ENCODE measurements at regions of chr1 and their contacts with region 1.

Region 1: DNA sequence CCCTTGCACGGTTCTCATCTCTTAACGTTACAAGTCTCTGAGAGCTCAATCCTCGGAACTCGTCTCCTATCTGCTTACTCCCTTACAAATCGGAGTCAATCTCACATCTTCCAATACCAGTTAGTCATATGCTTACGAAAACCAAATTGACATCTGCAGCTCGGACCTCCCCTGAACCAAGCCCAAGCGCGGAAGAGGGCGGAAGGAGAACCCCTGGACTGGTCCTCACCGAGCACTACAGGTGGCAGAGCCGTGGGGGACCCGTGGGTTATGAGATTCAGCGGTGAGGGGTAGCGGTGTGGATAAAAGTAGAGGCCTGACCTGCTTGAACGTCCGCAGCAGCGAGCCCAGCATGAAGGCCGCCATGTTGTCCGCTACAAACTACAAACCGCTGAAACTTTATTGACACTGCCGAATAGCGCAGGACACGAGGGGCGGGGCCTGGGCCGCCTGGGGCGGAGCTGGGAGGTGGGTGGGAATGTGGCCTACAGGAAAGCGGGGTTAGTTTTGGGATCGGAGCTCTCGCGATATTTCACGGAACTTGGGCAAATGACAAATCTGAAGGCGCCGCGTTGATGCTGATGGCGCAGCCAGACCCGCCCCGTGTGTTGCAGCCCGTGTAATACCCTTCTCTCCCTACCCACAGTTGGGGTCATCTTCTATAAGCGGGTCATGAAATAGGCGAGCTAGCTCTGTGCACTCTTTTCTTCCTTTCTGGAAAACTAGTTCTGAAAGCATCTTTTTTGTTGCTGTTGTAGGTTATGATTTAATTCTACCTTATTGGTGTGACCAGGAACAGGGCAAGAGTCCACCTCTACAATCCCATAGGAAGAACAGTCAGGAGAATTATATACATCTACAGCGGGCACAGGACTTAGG is at the start of gene MRPS14:
- DNase-seq: peak; percentile 98
- H3K4me3 Mint-ChIP-seq: peak within 1 kb of the TSS; percentile 89
- H3K27ac Mint-ChIP-seq: peak within 1 kb of the TSS; percentile 81
- H3K4me1 Mint-ChIP-seq: peaks cover 33% of the 10 kb centered on the region
- H3K27me3 Mint-ChIP-seq: no peaks in the 10 kb centered on the region
- total RNA-seq, gene MRPS14: 34.1 TPM

Region 2: GRCh38 chr1:174800216-174800851 is 222.9 kb before region 1 on chr1:
- CTCF ChIA-PET with region 1: interaction called, 4 read pairs
- POLR2A ChIA-PET with region 1: interaction called, 18 read pairs
- DNase-seq: peak; percentile 23
- H3K4me3 Mint-ChIP-seq: no peak overlapping the region
- H3K27ac Mint-ChIP-seq: no peak overlapping the region
- H3K4me1 Mint-ChIP-seq: peaks cover 13% of the 10 kb centered on the region
- H3K27me3 Mint-ChIP-seq: no peaks in the 10 kb centered on the region

Region 3: GRCh38 chr1:174968750-174969244 is 54.5 kb before region 1 on chr1:
- CTCF ChIA-PET with region 1: interaction called, 3 read pairs
- POLR2A ChIA-PET with region 1: interaction called, 13 read pairs
- DNase-seq: no peak
- H3K4me3 Mint-ChIP-seq: peak overlapping the region; percentile 62
- H3K27ac Mint-ChIP-seq: peak overlapping the region; percentile 93
- H3K4me1 Mint-ChIP-seq: peaks cover 77% of the 10 kb centered on the region
- H3K27me3 Mint-ChIP-seq: no peaks in the 10 kb centered on the region

Region 4: DNA sequence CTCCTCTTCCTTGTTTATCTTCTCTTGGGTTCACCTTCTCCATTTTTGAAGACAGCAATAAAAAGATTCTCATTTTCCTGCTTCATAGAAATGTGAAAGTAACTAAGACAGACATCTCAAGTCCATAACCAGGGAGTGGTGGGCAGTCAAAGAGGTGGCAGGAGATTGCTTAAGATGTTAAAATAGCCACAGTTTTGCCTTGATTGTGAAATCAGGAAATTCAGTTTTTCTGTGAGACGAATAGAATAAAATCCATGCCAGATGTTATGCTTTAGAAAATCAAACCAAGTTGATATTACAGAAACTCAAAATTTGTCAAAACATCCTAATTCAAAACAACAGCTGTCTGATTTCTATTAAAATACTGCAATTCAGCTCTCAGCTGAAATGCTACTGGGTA is 101.6 kb after region 1 on chr1:
- CTCF ChIA-PET with region 1: interaction called, 82 read pairs
- POLR2A ChIA-PET with region 1: interaction called, 3 read pairs
- DNase-seq: no peak
- H3K4me3 Mint-ChIP-seq: no peak overlapping the region
- H3K27ac Mint-ChIP-seq: no peak overlapping the region
- H3K4me1 Mint-ChIP-seq: no peaks in the 10 kb centered on the region
- H3K27me3 Mint-ChIP-seq: no peaks in the 10 kb centered on the region

Region 5: DNA sequence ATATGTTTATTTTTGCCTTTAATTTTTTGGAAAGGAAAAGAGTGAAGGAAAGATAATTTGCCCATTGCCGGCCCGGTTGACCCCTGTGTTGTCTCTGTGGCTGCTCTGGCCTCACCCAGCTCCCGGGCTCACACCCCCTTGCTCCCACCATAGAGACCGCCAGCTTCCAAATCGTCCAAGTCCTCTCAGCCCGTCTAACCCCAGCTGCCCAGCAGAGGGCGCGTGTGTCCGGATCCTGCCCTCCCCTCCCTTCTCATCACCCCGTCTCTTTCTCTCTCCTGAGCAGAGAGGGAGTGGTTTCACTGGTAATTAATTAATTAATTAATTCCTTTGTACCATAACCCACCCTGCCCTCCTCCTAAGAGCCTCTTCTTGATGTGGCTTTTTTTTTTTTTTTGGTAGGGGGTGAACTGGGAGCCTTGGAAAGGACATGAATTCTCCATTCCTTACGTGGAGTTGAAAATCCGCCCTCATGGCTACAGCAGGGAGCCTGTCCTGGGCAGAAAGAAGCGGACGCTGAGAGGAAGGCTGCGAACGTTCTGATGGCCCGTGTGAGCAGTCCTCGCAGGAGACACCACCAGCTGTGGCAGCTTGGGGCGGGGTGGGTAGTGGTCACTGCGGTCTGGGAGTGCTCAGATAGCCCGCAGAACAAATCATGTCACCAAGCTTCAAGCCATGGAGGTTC is 123.4 kb after region 1 on chr1:
- CTCF ChIA-PET with region 1: interaction called, 32 read pairs
- POLR2A ChIA-PET with region 1: interaction called, 3 read pairs
- DNase-seq: peak; percentile 70
- H3K4me3 Mint-ChIP-seq: no peak overlapping the region
- H3K27ac Mint-ChIP-seq: no peak overlapping the region
- H3K4me1 Mint-ChIP-seq: peaks cover 7% of the 10 kb centered on the region
- H3K27me3 Mint-ChIP-seq: peaks cover 27% of the 10 kb centered on the region

Region 6: DNA sequence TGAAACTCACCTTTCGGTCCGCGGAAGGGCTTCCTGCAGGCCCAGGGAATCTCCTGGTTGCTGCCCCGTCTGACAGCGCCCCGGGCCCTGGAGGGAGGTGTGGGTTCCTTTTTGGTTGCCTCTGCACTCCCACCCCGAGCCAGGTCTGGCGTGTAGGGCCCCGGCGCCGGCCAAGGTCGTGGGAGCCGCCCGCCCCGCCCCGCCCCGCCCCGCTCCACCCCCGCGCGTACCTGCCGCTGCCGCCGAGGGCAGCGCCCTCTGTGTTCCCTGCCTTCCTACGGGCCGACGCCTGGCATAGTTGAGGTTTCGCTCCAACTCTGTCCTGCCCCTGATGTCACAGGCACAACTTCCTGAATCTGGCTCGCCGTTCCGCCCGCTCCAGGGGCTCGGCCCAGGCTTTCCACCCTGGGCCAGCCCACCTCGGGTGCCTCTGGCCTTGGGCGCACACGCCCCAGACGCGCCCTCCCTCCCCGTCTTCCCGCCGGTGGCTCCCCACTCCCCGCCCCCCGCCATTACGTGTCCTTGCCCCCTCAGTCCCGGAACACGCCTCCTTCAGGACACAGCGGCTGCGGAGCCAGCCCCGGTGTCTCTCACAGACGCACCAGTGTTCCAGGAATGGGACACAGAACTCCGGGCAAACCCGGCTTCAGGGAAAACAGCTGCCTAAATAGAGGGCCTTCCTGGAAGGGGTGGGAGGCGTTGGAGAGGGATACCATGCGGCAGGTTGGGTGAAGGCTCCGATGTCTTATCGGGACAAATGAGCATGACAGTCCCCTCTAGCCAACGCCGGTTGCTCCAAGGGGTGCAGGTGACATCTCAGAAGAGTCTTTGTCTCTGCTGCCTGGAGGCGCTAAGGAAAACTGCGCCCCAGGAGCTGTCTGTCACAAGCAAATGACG is 169.6 kb after region 1 on chr1 and contains the start of gene KIAA0040:
- CTCF ChIA-PET with region 1: no interaction called
- POLR2A ChIA-PET with region 1: interaction called, 33 read pairs
- DNase-seq: peak; percentile 65
- H3K4me3 Mint-ChIP-seq: peak within 1 kb of the TSS; percentile 95
- H3K27ac Mint-ChIP-seq: peak within 1 kb of the TSS; percentile 93
- H3K4me1 Mint-ChIP-seq: peaks cover 52% of the 10 kb centered on the region
- H3K27me3 Mint-ChIP-seq: no peaks in the 10 kb centered on the region
- total RNA-seq, gene KIAA0040: 79.4 to 80.2 TPM

Region 7: DNA sequence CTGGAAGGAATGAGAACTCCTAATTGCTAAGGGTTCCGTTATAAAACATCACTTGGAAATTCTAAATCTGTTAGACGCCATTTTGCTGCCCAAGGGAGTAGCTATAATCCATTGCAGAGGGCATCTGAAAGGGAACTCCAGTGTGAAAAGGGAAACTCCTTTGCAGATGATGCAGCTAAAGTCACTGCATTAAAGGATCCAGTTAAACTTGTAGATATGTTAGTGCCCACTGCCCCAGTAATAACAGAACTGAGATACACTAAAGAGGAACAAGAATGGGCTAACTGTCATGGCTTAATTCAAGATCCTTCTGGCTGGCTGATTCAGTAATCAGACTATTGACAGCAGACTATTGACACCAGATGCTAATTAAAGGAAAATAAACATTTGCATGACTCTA is 251.1 kb after region 1 on chr1:
- CTCF ChIA-PET with region 1: no interaction called
- POLR2A ChIA-PET with region 1: no interaction called
- DNase-seq: no peak
- H3K4me3 Mint-ChIP-seq: no peak overlapping the region
- H3K27ac Mint-ChIP-seq: no peak overlapping the region
- H3K4me1 Mint-ChIP-seq: no peaks in the 10 kb centered on the region
- H3K27me3 Mint-ChIP-seq: no peaks in the 10 kb centered on the region